HCT116 (cell line): ENCODE measurements at regions of chr9 and their contacts with region 1.

Region 1: GRCh38 chr9:97615439-97616072 is 17.6 kb downstream of the TSTD2 start:
- DNase-seq: peak; percentile 29
- ATAC-seq: peak; percentile 81
- H3K4me3 ChIP-seq: no peak overlapping the region
- H3K27ac ChIP-seq: no peak overlapping the region
- H3K4me1 ChIP-seq: no peaks in the 10 kb centered on the region
- H3K27me3 ChIP-seq: no peaks in the 10 kb centered on the region
- CTCF ChIP-seq: peak; percentile 76 to 89 (median 83); a peak in 5 of 6 replicates
- POLR2A ChIP-seq: no peak
- RAD21 ChIP-seq: peak; percentile 84

Region 2: DNA sequence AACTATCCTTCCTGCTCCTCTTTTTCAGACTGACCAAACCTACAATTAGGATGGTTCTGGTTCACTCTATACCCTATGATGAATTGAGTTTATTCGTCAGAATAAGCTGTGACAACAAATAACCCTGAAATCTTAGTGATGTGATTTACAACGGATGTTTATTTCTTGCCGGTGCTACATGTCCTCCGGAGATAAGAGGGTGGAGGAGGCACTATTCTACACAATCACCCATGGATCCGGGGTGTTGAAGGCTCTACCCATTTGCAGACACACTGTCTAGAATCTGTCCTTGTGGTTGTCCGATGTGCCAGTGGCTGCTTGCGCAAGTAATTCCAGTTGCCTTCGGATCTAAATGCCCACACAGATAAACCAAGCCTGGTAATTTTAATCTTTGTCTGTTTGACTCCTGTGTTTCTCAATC is 1040.6 kb before region 1 on chr9:
- CTCF ChIA-PET with region 1: no interaction called
- POLR2A ChIA-PET with region 1: no interaction called
- RAD21 ChIA-PET with region 1: no interaction called
- intact Hi-C with region 1: no loop called
- DNase-seq: no peak
- ATAC-seq: no peak
- H3K4me3 ChIP-seq: no peak overlapping the region
- H3K27ac ChIP-seq: no peak overlapping the region
- H3K4me1 ChIP-seq: no peaks in the 10 kb centered on the region
- H3K27me3 ChIP-seq: no peaks in the 10 kb centered on the region
- CTCF ChIP-seq: no peak
- POLR2A ChIP-seq: no peak
- RAD21 ChIP-seq: no peak

Region 3: DNA sequence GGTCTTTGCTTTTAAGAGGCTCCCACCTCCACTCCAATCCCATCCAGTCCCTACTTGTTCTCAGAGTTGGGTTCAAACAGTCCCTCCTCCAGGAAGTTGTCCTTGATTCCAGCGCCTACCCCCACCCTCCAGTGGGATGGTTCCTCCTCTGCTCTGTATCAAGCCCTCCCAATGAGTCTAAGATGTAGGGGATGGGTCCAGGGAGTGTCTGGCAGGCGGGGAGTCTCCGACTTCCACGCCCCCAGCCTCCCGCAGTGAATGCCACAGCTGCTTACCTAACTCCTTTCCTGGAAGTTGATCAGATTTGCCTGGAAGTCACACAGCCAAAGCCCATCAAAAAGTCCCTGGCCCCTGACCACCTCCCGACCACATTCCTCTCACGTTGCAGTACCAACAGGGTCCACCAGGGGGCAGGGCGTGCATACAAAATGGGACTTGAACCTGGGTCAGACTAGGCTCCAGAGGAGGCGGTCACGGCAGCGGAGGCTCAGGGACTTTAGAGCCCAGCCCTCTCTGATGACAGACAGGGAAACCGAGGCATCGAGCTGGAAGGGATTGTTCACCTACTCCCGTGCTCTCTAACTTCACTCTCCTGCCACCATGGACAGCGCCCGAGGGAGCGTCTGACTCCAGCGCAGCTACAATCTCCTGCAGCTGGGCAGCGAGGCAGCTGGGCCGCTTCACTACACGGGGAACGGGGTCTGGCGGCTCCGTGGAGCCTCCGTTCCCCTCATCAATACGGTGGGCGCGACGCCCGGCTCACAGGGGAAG is 228.6 kb before region 1 on chr9:
- CTCF ChIA-PET with region 1: interaction called, 5 read pairs
- POLR2A ChIA-PET with region 1: no interaction called
- RAD21 ChIA-PET with region 1: no interaction called
- intact Hi-C with region 1: loop called (anchors 1 kb)
- DNase-seq: peak; percentile 22
- ATAC-seq: peak; percentile 85
- H3K4me3 ChIP-seq: no peak overlapping the region
- H3K27ac ChIP-seq: no peak overlapping the region
- H3K4me1 ChIP-seq: peaks cover 3 to 19% of the 10 kb centered on the region in 2 experiments; a peak in 3 of 4 replicates
- H3K27me3 ChIP-seq: no peaks in the 10 kb centered on the region
- CTCF ChIP-seq: peak; percentile 77 to 99 (median 96)
- POLR2A ChIP-seq: no peak
- RAD21 ChIP-seq: peak; percentile 93

Region 4: DNA sequence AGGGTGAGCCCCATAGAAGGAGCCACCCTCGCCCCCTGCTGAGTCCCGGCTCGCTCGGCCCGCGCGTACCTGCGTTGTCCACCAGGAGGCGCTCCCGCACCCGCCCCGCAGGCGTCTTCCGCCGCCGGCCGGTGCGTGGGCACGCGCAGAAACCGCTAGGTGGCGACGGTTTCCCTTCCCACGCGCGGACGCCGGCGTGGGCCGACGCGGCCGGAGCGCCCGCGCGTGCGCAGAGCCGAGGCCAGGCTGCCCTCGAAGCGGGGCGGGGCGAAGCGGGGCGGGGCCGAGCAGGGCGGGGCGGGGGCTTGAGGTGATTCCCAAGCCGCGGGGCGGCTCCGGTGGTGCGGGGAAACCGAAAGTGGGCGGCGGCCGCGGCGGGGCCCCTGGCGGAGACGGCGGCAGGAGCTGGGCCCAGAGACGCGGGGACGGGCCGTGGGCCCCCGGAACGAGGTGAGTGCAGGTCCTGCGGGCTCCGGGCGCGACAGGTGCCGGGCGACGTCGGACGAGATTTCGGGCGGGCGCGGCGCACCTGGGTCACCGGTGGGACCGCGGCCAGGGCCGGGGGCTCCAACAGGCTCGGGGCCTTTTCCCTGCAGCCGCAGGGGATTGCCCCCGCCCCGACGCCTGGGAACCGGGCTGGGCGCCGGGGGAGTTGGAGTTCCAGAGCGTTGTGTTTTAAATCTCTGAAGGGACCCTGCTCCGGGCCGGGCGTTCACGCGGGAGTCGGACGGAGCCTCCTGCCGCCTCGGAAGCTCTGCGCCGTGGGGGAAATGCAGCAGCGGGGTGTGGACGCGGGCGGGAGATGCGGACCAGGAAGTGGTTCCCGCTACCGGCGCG is 203.5 kb before region 1 on chr9 and contains the start of gene TDRD7:
- CTCF ChIA-PET with region 1: interaction called, 10 read pairs
- POLR2A ChIA-PET with region 1: no interaction called
- RAD21 ChIA-PET with region 1: interaction called in 1 of 2 experiments, 3 read pairs
- intact Hi-C with region 1: loop called (anchors 1 kb)
- DNase-seq: peak; percentile 61
- ATAC-seq: peak; percentile 90
- H3K4me3 ChIP-seq: peak within 1 kb of the TSS; percentile 63 to 69
- H3K27ac ChIP-seq: peak within 1 kb of the TSS; percentile 47; the same call in 1 of the 2 replicates
- H3K4me1 ChIP-seq: peaks cover 0 to 12% of the 10 kb centered on the region in 2 experiments; a peak in 2 of 4 replicates
- H3K27me3 ChIP-seq: no peaks in the 10 kb centered on the region
- CTCF ChIP-seq: peak; percentile 84 to 99 (median 98)
- POLR2A ChIP-seq: no peak
- RAD21 ChIP-seq: peak; percentile 71
- total RNA-seq, gene TDRD7: 8.0 TPM

Region 5: DNA sequence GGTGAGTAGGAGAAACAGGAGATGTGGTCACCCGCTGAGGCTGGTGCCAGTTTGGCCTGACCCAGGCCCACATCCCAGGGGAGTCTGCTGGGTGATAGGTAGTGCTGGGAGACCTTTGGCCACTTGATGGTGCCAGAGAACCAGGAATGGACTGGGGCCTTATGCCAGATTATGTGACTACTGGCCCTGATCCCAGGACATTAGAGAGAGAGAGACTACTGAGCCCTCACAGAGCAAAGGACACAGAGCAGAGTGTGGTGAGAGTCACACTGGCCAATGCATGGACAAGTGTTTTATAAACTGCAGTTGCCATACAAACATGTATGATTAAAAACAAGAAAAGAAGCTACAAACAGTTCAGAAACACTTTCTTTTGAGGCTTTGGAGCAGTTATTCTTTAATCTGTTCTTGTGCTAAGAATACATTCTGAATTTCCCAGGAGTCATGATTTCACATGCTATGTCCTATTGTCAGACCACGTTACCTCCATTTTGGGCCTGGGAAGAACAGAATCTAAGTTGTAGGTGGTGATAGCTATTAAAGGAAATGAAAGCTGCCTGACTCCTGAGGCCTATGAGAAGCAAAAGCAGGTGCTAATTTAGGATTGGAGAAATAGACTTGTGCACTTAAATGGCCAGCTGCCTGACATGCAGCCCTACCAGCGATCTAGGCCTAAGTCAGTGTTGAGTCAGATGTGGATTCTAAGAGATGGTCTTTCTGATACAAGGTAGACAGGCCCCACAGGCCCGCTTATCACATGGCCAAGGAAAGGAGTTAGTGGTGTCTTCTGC is 146.7 kb before region 1 on chr9:
- CTCF ChIA-PET with region 1: interaction called, 139 read pairs
- POLR2A ChIA-PET with region 1: interaction called, 3 read pairs
- RAD21 ChIA-PET with region 1: interaction called, 8 to 10 read pairs
- intact Hi-C with region 1: loop called (anchors 1 kb)
- DNase-seq: peak; percentile 28
- ATAC-seq: peak; percentile 98
- H3K4me3 ChIP-seq: no peak overlapping the region
- H3K27ac ChIP-seq: no peak overlapping the region
- H3K4me1 ChIP-seq: no peaks in the 10 kb centered on the region
- H3K27me3 ChIP-seq: no peaks in the 10 kb centered on the region
- CTCF ChIP-seq: peak; percentile 68 to 87 (median 72); a peak in 5 of 6 replicates
- POLR2A ChIP-seq: no peak
- RAD21 ChIP-seq: peak; percentile 91

Region 6: DNA sequence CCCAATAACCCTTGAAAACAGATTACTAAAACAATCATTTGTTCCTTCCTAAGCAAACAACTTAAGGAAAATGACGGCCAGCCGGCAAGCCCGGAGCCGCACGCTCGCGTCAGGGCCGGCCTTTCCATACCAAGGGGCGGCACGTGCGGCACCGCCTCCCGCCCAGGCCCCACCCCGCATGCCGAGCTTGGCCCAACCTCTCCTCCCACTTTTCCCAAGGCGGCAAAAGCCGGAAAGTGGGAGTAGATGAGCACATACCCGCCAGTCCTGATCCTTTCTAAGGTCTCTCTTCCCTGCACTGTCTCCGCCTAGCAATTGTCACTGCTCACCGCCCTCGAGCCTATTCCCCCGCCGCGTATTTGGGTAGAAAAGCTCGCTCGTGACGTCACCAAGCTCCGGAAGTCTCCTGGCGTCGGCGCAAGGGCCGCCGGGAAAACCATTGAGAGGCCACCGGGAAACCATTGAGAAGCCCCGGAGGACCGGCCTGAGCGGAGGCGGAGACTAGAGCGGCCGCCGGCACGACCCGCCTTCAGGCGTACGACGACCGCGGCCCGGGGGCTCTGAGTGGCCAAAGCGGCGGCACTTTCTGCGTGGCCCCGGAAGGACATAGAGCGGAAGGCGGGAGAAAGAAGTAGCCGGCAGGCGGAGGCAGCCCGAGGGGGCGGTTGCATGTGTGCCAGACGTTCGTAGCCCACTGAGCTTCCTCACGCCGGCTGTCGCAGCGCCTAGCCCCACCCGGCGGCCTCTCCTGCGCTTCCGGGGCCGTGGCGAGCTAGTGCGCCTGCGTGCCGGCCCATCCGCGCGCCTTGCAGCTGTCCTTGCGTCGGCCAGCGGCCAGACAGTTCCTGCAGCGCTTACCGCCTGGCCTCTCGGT is 17.7 kb after region 1 on chr9 and contains the starts of genes NCBP1 and TSTD2:
- CTCF ChIA-PET with region 1: interaction called, 11 read pairs
- POLR2A ChIA-PET with region 1: interaction called, 4 read pairs
- RAD21 ChIA-PET with region 1: no interaction called
- intact Hi-C with region 1: no loop called
- DNase-seq: peak; percentile 96
- ATAC-seq: peak; percentile 94
- H3K4me3 ChIP-seq: peak within 1 kb of the TSS; percentile 95 to 97
- H3K27ac ChIP-seq: peak within 1 kb of the TSS; percentile 95
- H3K4me1 ChIP-seq: peaks cover 9 to 15% of the 10 kb centered on the region in 2 experiments; a peak in 2 of 4 replicates
- H3K27me3 ChIP-seq: no peaks in the 10 kb centered on the region
- CTCF ChIP-seq: no peak
- POLR2A ChIP-seq: peak; percentile 82
- RAD21 ChIP-seq: no peak
- total RNA-seq, gene NCBP1: 32.9 TPM
- total RNA-seq, gene TSTD2: 16.0 TPM